A673 (cell line): ENCODE measurements at regions of chr9 and their contacts with region 1.

Region 1: GRCh38 chr9:120936011-120936763 is 9.6 kb upstream of the TRAF1 start:
- DNase-seq: peak; percentile 89
- H3K4me3 ChIP-seq: no peak overlapping the region
- H3K27ac ChIP-seq: peak overlapping the region; percentile 51
- H3K4me1 ChIP-seq: peaks cover 36% of the 10 kb centered on the region
- H3K27me3 ChIP-seq: no peaks in the 10 kb centered on the region
- CTCF ChIP-seq: peak; percentile 96

Region 2: DNA sequence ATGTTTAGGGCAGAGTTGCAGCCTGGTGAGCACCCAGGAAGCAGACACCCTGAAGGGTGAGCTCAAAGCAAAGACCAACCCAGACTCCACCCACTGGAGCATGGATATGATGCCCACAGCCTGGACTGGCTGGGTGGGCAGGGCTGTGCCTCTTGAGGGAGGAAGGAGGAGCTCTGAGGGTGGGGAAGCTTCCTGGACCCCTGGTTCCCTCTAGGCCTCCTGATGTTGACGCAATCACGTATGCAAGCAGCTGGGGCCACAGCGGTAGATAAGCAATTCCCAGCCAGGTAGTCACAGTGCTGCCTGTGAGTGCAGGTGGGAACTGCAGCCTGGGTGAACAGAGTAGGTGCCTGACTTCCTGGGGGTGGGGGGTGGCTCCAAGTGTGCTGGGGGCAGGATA is 627.7 kb before region 1 on chr9:
- CTCF ChIA-PET with region 1: no interaction called
- POLR2A ChIA-PET with region 1: no interaction called
- intact Hi-C with region 1: no loop called
- DNase-seq: no peak
- H3K4me3 ChIP-seq: no peak overlapping the region
- H3K27ac ChIP-seq: no peak overlapping the region
- H3K4me1 ChIP-seq: no peaks in the 10 kb centered on the region
- H3K27me3 ChIP-seq: peaks cover 25% of the 10 kb centered on the region
- CTCF ChIP-seq: no peak

Region 3: GRCh38 chr9:120755827-120756434 is 180.3 kb before region 1 on chr9:
- CTCF ChIA-PET with region 1: interaction called, 5 read pairs
- POLR2A ChIA-PET with region 1: no interaction called
- intact Hi-C with region 1: loop called (anchors 1 kb)
- DNase-seq: peak; percentile 65
- H3K4me3 ChIP-seq: no peak overlapping the region
- H3K27ac ChIP-seq: no peak overlapping the region
- H3K4me1 ChIP-seq: peaks cover 18% of the 10 kb centered on the region
- H3K27me3 ChIP-seq: no peaks in the 10 kb centered on the region
- CTCF ChIP-seq: peak; percentile 89

Region 4: DNA sequence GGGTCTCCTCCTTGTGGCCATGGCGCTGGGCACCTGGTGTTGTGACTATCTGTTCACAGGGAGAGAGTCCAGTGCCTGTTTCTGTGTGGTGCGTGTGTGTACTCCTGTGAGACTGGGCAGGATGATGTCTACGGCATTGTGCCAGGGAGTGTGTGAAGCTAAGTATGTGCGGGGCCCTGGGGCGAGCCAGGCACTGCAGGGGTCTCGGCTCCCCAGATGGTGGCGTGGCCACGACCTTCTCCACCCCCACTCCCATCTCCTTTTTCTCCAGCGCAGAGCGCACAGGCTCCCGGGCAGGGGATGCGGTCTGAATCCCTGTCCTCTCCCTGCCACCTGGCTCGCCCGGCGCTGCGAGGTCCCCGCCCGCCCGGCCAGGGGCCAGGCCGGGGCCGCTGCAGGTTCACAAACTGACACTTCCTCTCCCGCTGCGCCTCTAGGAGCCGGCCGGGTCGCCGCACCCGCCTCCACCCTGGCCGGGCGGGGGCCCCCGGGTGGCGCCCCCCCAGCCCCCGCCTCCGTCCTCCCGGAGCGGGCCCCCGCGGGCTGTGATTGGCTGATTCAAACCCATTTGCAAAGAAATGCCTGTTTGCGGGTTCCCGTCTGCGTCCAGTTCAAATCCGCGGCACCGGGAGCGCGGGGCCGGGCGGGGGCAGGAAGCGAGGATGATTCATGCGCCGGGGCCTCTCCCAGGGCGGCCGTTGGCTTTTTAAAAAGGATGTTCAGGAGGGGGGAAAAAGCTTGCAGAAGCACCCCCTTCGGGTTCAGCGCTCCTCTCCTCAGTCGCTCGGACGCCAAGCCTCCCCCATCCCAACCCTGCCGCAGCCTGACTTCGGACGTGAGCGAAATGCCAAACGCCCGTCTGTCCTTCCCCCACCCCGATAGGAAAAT is 60.0 kb before region 1 on chr9:
- CTCF ChIA-PET with region 1: no interaction called
- POLR2A ChIA-PET with region 1: no interaction called
- intact Hi-C with region 1: loop called (anchors 5 kb)
- DNase-seq: peak; percentile 81
- H3K4me3 ChIP-seq: peak overlapping the region; percentile 96
- H3K27ac ChIP-seq: peak overlapping the region; percentile 86
- H3K4me1 ChIP-seq: peaks cover 22% of the 10 kb centered on the region
- H3K27me3 ChIP-seq: no peaks in the 10 kb centered on the region
- CTCF ChIP-seq: no peak